Activated CD4-positive, alpha-beta T cell treated with anti-CD3 and anti-CD28 coated beads for 36 hours (primary cell): ENCODE measurements at regions of chr1 and their contacts with region 1.

Region 1: GRCh38 chr1:200351826-200352549 is 57.8 kb downstream of the ZNF281 start:
- DNase-seq: peak; percentile 23
- ATAC-seq: peak; percentile 68
- H3K4me3 Mint-ChIP-seq: peak overlapping the region; percentile 30
- H3K27ac Mint-ChIP-seq: peak overlapping the region; percentile 82
- H3K4me1 Mint-ChIP-seq: peaks cover 35% of the 10 kb centered on the region
- H3K27me3 Mint-ChIP-seq: no peaks in the 10 kb centered on the region

Region 2: DNA sequence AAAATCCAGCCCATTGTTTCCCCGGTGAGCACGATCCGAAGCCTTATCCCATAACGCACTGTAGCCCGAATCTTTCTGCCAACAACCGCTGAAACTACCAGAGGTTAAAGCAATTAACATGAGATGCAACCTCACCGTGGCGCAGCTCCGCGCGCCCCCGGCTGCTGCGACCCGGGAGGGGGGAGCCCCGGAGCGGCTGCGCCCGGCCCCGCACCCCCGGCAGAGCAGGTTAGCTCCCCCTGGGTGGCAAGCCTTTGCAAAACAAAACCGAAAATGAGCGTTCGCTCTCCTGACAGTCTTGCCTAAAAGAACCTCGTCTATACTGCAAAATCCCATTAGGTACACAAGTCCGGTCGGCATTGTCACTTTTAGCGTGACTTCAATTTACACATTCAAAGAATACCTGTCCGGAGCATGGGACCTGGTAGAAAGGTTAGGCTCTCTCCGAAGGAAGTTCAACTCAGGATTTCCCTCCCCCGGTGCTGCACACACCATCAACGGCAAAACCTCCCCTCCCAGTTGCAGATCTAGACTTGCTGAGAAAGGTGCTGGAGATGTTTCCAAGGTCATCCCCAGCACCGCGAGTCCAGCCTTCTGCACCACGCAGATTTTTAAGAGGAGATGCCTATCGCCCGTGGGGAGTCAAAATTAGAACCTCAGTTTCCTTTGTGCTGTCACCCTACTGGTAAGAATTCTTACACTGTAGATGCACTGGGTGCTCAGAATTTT is 49.6 kb before region 1 on chr1:
- CTCF ChIA-PET with region 1: no interaction called
- POLR2A ChIA-PET with region 1: no interaction called
- intact Hi-C with region 1: no loop called
- DNase-seq: peak; percentile 77
- ATAC-seq: peak; percentile 93
- H3K4me3 Mint-ChIP-seq: peak overlapping the region; percentile 73
- H3K27ac Mint-ChIP-seq: no peak overlapping the region
- H3K4me1 Mint-ChIP-seq: peaks cover 12% of the 10 kb centered on the region
- H3K27me3 Mint-ChIP-seq: no peaks in the 10 kb centered on the region

Region 3: GRCh38 chr1:200336111-200336845 is 15.7 kb before region 1 on chr1:
- CTCF ChIA-PET with region 1: interaction called, 3 read pairs
- POLR2A ChIA-PET with region 1: no interaction called
- intact Hi-C with region 1: loop called in 1 of 2 experiments (anchors 2 kb)
- DNase-seq: no peak
- ATAC-seq: no peak
- H3K4me3 Mint-ChIP-seq: no peak overlapping the region
- H3K27ac Mint-ChIP-seq: no peak overlapping the region
- H3K4me1 Mint-ChIP-seq: peaks cover 23% of the 10 kb centered on the region
- H3K27me3 Mint-ChIP-seq: no peaks in the 10 kb centered on the region

Region 4: DNA sequence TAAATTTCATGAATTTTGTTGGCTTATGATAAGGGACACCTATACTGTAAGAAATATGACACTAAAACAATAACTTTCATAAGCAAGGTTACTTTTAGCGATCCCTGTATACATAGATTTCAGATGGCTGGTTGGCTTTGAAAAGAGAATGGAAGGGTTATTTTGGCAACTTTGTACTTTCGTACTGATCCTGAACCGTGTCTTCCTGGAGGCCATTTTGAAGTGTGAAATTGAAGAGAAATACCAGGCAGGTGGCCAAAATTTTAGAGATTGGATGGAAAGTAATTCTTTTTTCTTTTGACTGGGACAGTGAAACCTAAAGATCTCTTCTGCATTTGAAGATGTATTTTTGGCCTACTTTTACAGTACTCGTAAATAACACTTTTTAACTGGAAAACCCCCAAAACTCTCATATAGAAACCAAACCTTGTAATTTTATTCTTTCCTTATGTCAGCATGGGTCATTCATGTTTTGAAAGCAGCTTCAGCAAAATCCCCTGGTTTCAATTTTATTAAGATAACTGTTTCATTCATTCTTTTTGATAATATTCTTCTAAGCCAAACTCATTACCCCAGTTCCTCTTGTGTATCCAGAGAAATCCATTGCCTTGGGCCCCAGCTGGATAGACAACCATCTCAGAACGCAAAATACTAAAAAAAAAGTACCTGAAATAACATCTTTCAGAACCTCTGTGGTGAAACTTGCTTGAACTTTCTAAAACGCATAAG is 96.2 kb after region 1 on chr1:
- CTCF ChIA-PET with region 1: no interaction called
- POLR2A ChIA-PET with region 1: no interaction called
- intact Hi-C with region 1: loop called (anchors 1 to 2 kb)
- DNase-seq: peak; percentile 15
- ATAC-seq: peak; percentile 75
- H3K4me3 Mint-ChIP-seq: no peak overlapping the region
- H3K27ac Mint-ChIP-seq: peak overlapping the region; percentile 92
- H3K4me1 Mint-ChIP-seq: peaks cover 44% of the 10 kb centered on the region
- H3K27me3 Mint-ChIP-seq: peaks cover 7% of the 10 kb centered on the region

Region 5: GRCh38 chr1:200473698-200474371 is 121.8 kb after region 1 on chr1:
- CTCF ChIA-PET with region 1: interaction called, 3 read pairs
- POLR2A ChIA-PET with region 1: no interaction called
- intact Hi-C with region 1: loop called in 1 of 2 experiments (anchors 5 kb)
- DNase-seq: peak; percentile 55
- ATAC-seq: peak; percentile 80
- H3K4me3 Mint-ChIP-seq: peak overlapping the region; percentile 32
- H3K27ac Mint-ChIP-seq: peak overlapping the region; percentile 48
- H3K4me1 Mint-ChIP-seq: peaks cover 47% of the 10 kb centered on the region
- H3K27me3 Mint-ChIP-seq: peaks cover 8% of the 10 kb centered on the region